Activated CD4-positive, alpha-beta T cell treated with anti-CD3 and anti-CD28 coated beads for 36 hours (primary cell): ENCODE measurements at regions of chr2 and their contacts with region 1.

Region 1: DNA sequence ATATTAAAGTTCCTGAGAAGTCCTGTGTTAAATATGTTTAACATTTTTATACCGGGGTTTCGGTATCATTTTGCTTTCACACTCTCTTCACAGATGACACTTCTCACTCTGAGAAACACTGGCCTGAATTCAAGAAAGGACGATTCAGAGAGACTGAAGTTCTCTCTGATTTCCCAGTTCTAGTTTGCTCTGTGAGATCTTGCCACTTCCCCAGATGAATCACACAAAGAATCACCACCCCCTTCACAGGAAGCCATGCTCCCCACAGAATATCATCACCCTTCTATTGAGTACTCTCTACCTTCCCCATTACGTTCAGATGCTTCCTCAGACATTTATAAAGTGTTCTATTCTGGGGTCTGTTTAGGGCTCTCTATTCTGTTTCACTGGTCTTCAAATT is 16.1 kb upstream of the CD207 start:
- DNase-seq: peak; percentile 59
- ATAC-seq: peak; percentile 99
- H3K4me3 Mint-ChIP-seq: peak overlapping the region; percentile 1
- H3K27ac Mint-ChIP-seq: peak overlapping the region; percentile 85
- H3K4me1 Mint-ChIP-seq: peaks cover 29% of the 10 kb centered on the region
- H3K27me3 Mint-ChIP-seq: peaks cover 2% of the 10 kb centered on the region

Region 2: DNA sequence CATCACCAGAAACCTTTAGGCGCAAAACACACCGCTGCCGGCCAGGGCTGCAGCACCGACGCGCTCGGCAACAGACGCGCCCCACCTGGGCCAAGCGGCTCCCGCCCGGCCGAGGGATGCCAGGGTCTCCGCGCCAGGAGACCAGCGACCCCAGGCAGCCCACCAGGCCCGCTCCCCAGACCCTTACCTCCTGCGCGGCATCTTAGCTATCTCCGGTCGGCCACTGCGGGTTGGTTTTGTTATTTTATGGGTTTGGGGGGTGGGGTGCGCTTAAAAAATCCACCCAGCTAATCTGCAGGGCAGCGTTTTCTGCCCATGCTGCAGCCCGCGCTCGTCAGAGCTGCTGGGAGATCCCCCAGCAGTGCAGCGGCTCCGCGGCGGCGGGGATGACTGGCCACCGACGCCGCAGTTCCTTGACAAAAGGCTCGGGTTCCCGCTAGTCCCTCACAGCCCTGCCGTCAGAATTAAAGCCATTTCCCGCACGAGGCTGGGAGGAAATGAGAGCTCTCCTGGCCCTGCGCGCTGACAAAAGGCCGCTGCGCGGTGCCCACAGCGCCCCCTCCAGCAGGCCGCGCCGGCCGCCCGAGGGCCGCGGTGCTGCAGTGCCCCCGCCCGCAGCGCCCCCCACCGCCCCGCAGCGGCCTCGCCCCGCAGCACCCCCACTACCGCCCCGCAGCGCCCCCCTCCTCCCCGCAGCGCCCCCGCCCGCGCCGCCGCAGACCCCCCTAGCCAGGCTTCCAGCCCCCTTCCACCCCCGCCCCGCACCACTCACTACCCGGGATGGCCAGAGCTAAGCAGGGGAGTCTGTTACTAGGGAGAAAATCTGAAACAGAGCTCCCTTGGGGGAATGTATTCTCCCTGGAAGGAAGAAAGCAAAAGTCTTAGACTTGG is 83.8 kb before region 1 on chr2 and contains the start of gene ADD2:
- CTCF ChIA-PET with region 1: interaction called, 3 read pairs
- POLR2A ChIA-PET with region 1: no interaction called
- intact Hi-C with region 1: loop called in 1 of 2 experiments (anchors 1 kb)
- DNase-seq: peak; percentile 85
- ATAC-seq: peak; percentile 90
- H3K4me3 Mint-ChIP-seq: peak within 1 kb of the TSS; percentile 84
- H3K27ac Mint-ChIP-seq: peak within 1 kb of the TSS; percentile 88
- H3K4me1 Mint-ChIP-seq: peaks cover 18% of the 10 kb centered on the region
- H3K27me3 Mint-ChIP-seq: peaks cover 26% of the 10 kb centered on the region
- total RNA-seq, gene ADD2: 26.9 to 31.5 TPM